ENCODE measurements at regions of chr18 and their contacts with region 1.

Region 1: GRCh38 chr18:66271927-66272326 is 332.0 kb downstream of the CDH19 start:
- DNase-seq: no peak
- ATAC-seq: no peak
- H3K4me3 ChIP-seq: no peak overlapping the region
- H3K27ac ChIP-seq: no peak overlapping the region
- H3K4me1 ChIP-seq: no peaks in the 10 kb centered on the region
- H3K27me3 ChIP-seq: no peaks in the 10 kb centered on the region
- CTCF ChIP-seq: no peak
- POLR2A ChIP-seq: no peak

Region 2: GRCh38 chr18:65623686-65624085 is 648.2 kb before region 1 on chr18:
- intact Hi-C with region 1: no loop called
- DNase-seq: no peak
- ATAC-seq: no peak
- H3K4me3 ChIP-seq: no peak overlapping the region
- H3K27ac ChIP-seq: no peak overlapping the region
- H3K4me1 ChIP-seq: no peaks in the 10 kb centered on the region
- H3K27me3 ChIP-seq: no peaks in the 10 kb centered on the region
- CTCF ChIP-seq: no peak
- POLR2A ChIP-seq: no peak

Region 3: DNA sequence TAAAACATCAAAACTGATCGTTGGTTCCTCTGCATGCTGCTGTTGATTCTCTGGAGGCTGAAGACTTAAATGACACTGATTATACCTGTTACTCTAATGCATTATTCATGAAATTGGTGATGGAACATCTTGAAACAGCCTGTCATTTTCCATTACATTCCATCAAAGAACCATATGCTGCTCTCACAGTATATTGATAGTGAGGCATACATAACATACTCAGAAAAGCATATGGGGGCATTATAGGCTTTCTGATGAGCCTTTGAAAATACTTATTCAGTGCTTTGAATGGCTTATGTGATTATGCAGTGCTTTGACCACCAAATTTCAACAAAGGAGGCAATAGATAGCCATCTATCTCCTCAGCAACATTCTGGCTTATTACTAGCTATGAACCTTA is 60.2 kb before region 1 on chr18:
- intact Hi-C with region 1: loop called in 1 of 10 experiments (anchors 10 kb)
- DNase-seq: no peak
- ATAC-seq: no peak
- H3K4me3 ChIP-seq: no peak overlapping the region
- H3K27ac ChIP-seq: no peak overlapping the region
- H3K4me1 ChIP-seq: no peaks in the 10 kb centered on the region
- H3K27me3 ChIP-seq: no peaks in the 10 kb centered on the region
- CTCF ChIP-seq: no peak
- POLR2A ChIP-seq: no peak

Region 4: GRCh38 chr18:66393463-66393862 is 121.5 kb after region 1 on chr18:
- intact Hi-C with region 1: no loop called
- DNase-seq: no peak
- ATAC-seq: no peak
- H3K4me3 ChIP-seq: no peak overlapping the region
- H3K27ac ChIP-seq: no peak overlapping the region
- H3K4me1 ChIP-seq: no peaks in the 10 kb centered on the region
- H3K27me3 ChIP-seq: no peaks in the 10 kb centered on the region
- CTCF ChIP-seq: peak in 1 of 12 donors; percentile 5
- POLR2A ChIP-seq: no peak